CD4-positive, alpha-beta T cell (primary cell): ENCODE measurements at regions of chr6 and their contacts with region 1.

Region 1: GRCh38 chr6:624979-625378 is 31.9 kb downstream of the HUS1B start:
- DNase-seq: no peak
- ATAC-seq: no peak
- H3K4me3 ChIP-seq: no peak overlapping the region
- H3K4me3 Mint-ChIP-seq: no peak overlapping the region
- H3K27ac ChIP-seq: no peak overlapping the region
- H3K27ac Mint-ChIP-seq: no peak overlapping the region
- H3K4me1 ChIP-seq: no peaks in the 10 kb centered on the region
- H3K4me1 Mint-ChIP-seq: peaks cover 16% of the 10 kb centered on the region
- H3K27me3 ChIP-seq: no peaks in the 10 kb centered on the region
- H3K27me3 Mint-ChIP-seq: no peaks in the 10 kb centered on the region
- CTCF ChIP-seq: no peak

Region 2: DNA sequence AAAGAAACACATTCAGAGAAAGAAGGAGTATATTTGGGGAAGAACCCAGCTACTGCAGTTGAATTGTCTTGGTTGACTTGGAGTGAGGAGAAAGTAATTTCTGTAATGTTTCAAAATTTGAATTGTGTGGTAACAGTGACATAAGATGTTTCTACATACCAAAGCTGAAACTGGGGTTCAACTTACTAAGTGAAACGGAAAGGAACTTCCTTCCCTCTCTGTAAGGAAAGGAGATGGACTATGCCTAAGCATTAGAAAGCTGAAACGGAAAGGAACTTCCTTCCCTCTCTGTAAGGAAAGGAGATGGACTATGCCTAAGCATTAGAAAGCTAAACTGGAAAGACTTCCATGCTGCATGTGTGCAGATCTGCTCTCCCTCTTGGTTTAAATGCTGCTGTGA is 14.1 kb before region 1 on chr6:
- CTCF ChIA-PET with region 1: no interaction called
- POLR2A ChIA-PET with region 1: no interaction called
- intact Hi-C with region 1: loop called in 1 of 2 experiments (anchors 1 kb)
- DNase-seq: no peak
- ATAC-seq: no peak
- H3K4me3 ChIP-seq: no peak overlapping the region
- H3K4me3 Mint-ChIP-seq: no peak overlapping the region
- H3K27ac ChIP-seq: no peak overlapping the region
- H3K27ac Mint-ChIP-seq: no peak overlapping the region
- H3K4me1 ChIP-seq: no peaks in the 10 kb centered on the region
- H3K4me1 Mint-ChIP-seq: no peaks in the 10 kb centered on the region
- H3K27me3 ChIP-seq: no peaks in the 10 kb centered on the region
- H3K27me3 Mint-ChIP-seq: no peaks in the 10 kb centered on the region
- CTCF ChIP-seq: no peak

Region 3: GRCh38 chr6:885051-885590 is 260.1 kb after region 1 on chr6:
- CTCF ChIA-PET with region 1: no interaction called
- POLR2A ChIA-PET with region 1: no interaction called
- intact Hi-C with region 1: no loop called
- DNase-seq: peak in 1 of 14 experiments; percentile 4
- ATAC-seq: no peak
- H3K4me3 ChIP-seq: no peak overlapping the region
- H3K4me3 Mint-ChIP-seq: no peak overlapping the region
- H3K27ac ChIP-seq: no peak overlapping the region
- H3K27ac Mint-ChIP-seq: no peak overlapping the region
- H3K4me1 ChIP-seq: no peaks in the 10 kb centered on the region
- H3K4me1 Mint-ChIP-seq: peaks cover 11% of the 10 kb centered on the region
- H3K27me3 ChIP-seq: no peaks in the 10 kb centered on the region
- H3K27me3 Mint-ChIP-seq: peaks cover 19% of the 10 kb centered on the region
- CTCF ChIP-seq: no peak